ENCODE measurements at regions of chr17 and their contacts with region 1.

Region 1: GRCh38 chr17:80316927-80317702 is 56.5 kb downstream of the RNF213 start:
- DNase-seq: peak; percentile 65

Region 2: GRCh38 chr17:79695797-79696609 is 621.1 kb before region 1 on chr17:
- intact Hi-C with region 1: no loop called
- DNase-seq: no peak

Region 3: DNA sequence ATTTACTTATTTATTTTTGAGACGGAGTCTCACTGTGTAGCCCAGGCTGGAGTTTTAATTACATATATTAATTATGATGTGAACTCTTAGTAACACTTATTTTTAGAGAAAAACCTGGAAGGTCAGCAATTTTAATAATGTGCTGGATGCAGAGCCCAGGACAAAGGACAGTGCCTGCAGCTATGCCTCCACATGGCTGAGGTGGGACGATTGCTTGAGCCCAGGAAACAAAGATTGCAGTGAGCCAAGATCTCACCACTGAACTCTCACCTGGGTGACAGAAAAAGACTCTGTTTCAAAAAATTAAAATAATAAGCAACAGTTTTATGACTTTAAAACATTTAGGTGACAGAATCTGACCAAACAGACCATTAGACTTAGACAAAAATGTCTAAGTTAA is 158.3 kb before region 1 on chr17:
- intact Hi-C with region 1: loop called in 1 of 2 experiments (anchors 5 kb)
- DNase-seq: no peak

Region 4: GRCh38 chr17:80374732-80375585 is 57.8 kb after region 1 on chr17:
- intact Hi-C with region 1: loop called in 1 of 2 experiments (anchors 10 kb)
- DNase-seq: peak; percentile 25

Region 5: DNA sequence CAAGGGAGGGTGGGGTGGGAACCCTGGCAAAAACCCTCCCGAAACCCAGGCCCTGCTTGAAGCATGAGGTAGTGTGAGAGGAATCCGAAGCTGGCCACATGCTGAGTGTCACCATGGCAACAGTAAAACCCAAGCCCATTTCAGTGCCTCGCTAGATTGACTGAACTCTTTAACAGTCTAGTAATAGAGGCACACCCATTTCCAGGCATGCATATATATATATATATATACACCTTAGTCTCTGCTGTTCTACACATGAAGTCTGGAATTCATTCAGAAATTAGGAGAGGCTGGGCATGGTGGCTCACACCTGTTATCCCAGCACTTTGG is 614.8 kb after region 1 on chr17:
- intact Hi-C with region 1: loop called in 1 of 2 experiments (anchors 5 kb)
- DNase-seq: no peak